Head of caudate nucleus (tissue), 42 donors: ENCODE measurements at regions of chr16 and their contacts with region 1.

Region 1: GRCh38 chr16:76653390-76654026 is 376.3 kb downstream of the CNTNAP4 start:
- DNase-seq: peak in 34 of 42 donors; percentile 5 to 79 (median 48)

Region 2: GRCh38 chr16:75801307-75801706 is 852.2 kb before region 1 on chr16:
- intact Hi-C with region 1: loop called (anchors 10 kb)
- DNase-seq: peak in 1 of 42 donors; percentile 6

Region 3: GRCh38 chr16:76278980-76279379 is 374.5 kb before region 1 on chr16:
- intact Hi-C with region 1: loop called (anchors 10 kb)
- DNase-seq: peak in 5 of 42 donors; percentile 19 to 54 (median 43)

Region 4: GRCh38 chr16:76705892-76706291 is 52.4 kb after region 1 on chr16:
- intact Hi-C with region 1: no loop called
- DNase-seq: no peak